Panc1 (cell line): ENCODE measurements at regions of chr15 and their contacts with region 1.

Region 1: GRCh38 chr15:84748274-84749110 is at the start of gene ZNF592:
- DNase-seq: no peak
- ATAC-seq: peak; percentile 91
- H3K4me3 ChIP-seq: peak within 1 kb of the TSS; percentile 89 to 100
- H3K27ac ChIP-seq: peak within 1 kb of the TSS; percentile 94
- H3K4me1 ChIP-seq: peaks cover 31% of the 10 kb centered on the region
- H3K27me3 ChIP-seq: no peaks in the 10 kb centered on the region
- CTCF ChIP-seq: peak; percentile 69
- total RNA-seq, gene ZNF592: 34.2 TPM

Region 2: DNA sequence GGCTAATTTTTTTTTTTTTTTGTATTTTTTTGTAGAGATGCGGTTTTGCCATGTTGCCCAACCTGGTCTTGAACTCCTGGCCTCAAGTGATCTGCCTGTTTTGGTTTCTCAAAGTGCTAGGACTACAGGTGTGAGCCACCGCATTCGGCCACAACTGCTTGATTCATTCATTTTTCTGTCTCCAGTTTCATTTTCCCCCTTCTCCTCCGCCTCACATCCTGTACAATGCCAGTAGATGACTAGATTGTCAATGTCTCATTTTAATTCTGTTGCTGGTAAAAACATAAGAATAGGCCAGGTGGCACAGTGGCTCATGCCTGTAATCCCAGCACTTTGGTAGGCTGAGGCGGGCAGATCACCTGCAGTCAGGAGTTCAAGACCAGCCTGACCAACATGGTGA is 12.1 kb before region 1 on chr15:
- CTCF ChIA-PET with region 1: no interaction called
- POLR2A ChIA-PET with region 1: interaction called, 13 read pairs
- in situ Hi-C with region 1: no loop called
- intact Hi-C with region 1: no loop called
- DNase-seq: no peak
- ATAC-seq: no peak
- H3K4me3 ChIP-seq: no peak overlapping the region
- H3K27ac ChIP-seq: no peak overlapping the region
- H3K4me1 ChIP-seq: peaks cover 6% of the 10 kb centered on the region; the same call in 1 of the 2 replicates
- H3K27me3 ChIP-seq: no peaks in the 10 kb centered on the region
- CTCF ChIP-seq: no peak

Region 3: GRCh38 chr15:84894442-84895361 is 146.2 kb after region 1 on chr15:
- CTCF ChIA-PET with region 1: no interaction called
- POLR2A ChIA-PET with region 1: no interaction called
- in situ Hi-C with region 1: no loop called
- intact Hi-C with region 1: no loop called
- DNase-seq: no peak
- ATAC-seq: 0 out of 2 replicates have a peak, but pooled peaks have one; percentile 47
- H3K4me3 ChIP-seq: no peak overlapping the region
- H3K27ac ChIP-seq: no peak overlapping the region
- H3K4me1 ChIP-seq: no peaks in the 10 kb centered on the region
- H3K27me3 ChIP-seq: no peaks in the 10 kb centered on the region
- CTCF ChIP-seq: no peak

Region 4: DNA sequence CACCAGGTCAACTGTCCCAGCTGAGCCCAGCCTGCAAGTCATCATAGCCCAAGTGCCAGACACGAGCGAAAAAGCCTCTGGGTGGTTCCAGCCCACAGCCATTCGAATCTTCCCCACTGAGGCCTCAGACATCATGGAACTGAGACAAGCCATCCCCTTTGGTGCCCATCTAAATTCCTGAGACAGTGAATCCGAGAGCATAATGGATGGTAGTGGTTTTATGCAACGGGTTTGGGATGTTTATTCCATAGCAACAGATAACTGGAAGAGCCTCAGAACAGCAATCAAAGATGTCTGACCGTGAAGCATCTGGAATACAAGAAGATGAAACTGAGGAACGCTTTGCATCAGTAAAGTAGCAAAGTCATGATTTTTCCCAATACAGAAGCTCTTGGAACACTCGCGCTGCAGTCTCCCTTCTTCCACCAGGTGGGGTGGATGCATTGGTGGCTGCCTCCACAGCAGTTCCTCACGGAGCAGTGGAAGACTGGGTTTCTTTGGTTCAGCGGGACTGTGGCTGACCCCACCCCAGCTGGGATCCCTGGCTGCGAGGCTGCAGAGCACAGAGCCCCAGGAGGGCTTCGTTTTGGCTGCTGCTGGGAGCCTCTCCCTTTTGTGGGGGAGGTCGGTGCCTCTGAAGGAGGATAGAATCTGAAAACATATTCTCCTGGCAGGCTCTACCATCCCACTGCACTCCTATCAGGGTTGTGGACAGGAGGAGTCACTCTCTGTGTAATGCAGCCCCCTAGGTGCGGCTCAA is 206.8 kb after region 1 on chr15:
- CTCF ChIA-PET with region 1: no interaction called
- POLR2A ChIA-PET with region 1: interaction called, 15 read pairs
- in situ Hi-C with region 1: no loop called
- intact Hi-C with region 1: no loop called
- DNase-seq: peak; percentile 41
- ATAC-seq: peak; percentile 99
- H3K4me3 ChIP-seq: peak overlapping the region; percentile 29 to 52
- H3K27ac ChIP-seq: no peak overlapping the region
- H3K4me1 ChIP-seq: peaks cover 5% of the 10 kb centered on the region
- H3K27me3 ChIP-seq: no peaks in the 10 kb centered on the region
- CTCF ChIP-seq: peak; percentile 92